ENCODE measurements at regions of chr13 and their contacts with region 1.

Region 1: DNA sequence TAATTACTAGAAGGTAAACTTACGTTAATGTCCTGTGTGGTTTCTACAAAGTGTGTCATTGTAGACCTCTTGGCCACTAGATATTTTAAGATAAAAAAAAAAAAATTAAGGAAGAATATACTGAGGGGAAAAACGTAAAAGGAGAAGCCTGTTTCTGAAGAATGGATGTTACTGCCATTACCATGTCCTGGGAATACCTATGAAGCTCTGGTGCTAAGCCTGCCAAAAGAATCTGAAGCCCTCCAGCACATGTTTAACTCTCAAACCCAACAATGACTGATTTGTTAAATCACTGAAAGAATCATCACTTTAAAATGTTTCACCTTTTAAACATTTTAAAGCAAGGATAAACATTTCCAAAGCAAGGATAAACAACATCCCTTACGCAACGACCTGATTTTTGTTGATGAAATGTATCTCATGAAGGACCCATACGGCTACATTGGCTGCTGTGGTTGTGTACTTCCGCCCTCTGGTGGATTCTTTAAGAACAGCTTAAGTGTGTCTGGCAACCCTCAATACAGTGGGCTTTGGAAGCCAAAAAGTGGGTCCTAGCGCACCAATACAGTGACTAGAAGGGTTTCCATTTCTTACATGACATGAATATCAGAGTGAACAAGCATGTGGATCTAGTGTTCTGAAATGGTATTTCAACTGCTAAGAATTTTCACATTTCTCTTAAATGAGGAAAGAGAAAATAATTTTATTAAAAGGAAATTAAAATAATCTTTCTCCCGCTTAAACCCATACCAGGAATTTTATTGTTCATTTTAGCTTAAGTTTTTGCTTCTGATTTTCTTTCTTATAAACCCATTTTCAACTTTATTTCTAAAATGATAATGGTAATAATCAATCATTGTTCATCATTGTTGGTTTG is 74.5 kb upstream of the RAP2A start:
- DNase-seq: peak; percentile 75
- H3K4me3 ChIP-seq: no peak overlapping the region
- H3K27ac ChIP-seq: no peak overlapping the region
- H3K27me3 ChIP-seq: no peaks in the 10 kb centered on the region
- CTCF ChIP-seq: peak; percentile 90

Region 2: GRCh38 chr13:97141564-97142005 is 217.8 kb before region 1 on chr13:
- in situ Hi-C with region 1: no loop called
- DNase-seq: peak; percentile 89
- H3K4me3 ChIP-seq: no peak overlapping the region
- H3K27ac ChIP-seq: peak overlapping the region; percentile 38
- H3K27me3 ChIP-seq: no peaks in the 10 kb centered on the region
- CTCF ChIP-seq: no peak

Region 3: GRCh38 chr13:97221989-97222700 is 137.3 kb before region 1 on chr13 and contains the start of gene MBNL2:
- in situ Hi-C with region 1: loop called (anchors 25 kb)
- DNase-seq: peak; percentile 95
- H3K4me3 ChIP-seq: peak within 1 kb of the TSS; percentile 81
- H3K27ac ChIP-seq: peak within 1 kb of the TSS; percentile 94
- H3K27me3 ChIP-seq: no peaks in the 10 kb centered on the region
- CTCF ChIP-seq: no peak